Naive thymus-derived CD4-positive, alpha-beta T cell (primary cell): ENCODE measurements at regions of chr2 and their contacts with region 1.

Region 1: DNA sequence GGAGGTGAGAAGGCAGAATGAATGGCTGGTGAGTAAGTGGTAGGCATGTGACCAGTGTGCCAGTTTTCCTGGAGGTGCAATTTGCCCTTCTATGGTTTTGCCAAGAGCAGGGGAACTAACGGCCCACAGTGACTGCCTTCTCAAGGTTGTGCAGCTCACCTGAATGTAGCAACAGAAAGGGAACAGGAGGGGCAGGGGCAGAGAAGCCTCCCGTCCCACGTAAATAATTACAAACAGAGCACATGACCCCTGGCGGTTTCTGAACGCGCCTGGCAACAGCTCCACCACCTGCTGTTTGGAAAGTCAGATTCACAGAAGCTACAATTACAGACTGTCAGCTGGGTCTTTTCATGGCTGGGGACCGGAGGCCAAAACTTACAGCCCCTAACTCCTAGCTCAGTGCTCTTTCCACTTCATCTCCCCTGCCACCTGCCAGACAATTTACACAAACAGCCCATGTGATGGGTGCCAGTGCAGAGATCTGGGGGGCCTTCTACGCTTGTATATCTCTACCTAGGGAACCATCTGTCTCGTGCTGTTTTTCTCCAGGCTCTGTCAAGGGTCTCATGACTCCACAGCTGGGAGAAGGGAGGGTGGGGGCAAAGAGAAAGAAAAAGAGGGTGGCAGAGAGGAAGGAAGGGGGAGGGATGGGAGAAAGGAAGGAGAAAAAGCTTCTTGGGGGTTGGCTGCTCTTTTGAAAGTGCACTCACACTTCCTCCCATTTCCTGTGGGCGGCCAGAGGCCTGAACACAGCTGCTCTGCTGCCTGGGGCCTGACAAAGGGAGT is 69.6 kb downstream of the POLR1A start:
- DNase-seq: peak in 8 of 9 donors; percentile 63 to 89 (median 84)
- ATAC-seq: peak; percentile 65
- H3K4me3 ChIP-seq: peak overlapping the region; percentile 48
- H3K4me3 Mint-ChIP-seq: peak overlapping the region; percentile 80 to 88 (median 86)
- H3K27ac ChIP-seq: peak overlapping the region; percentile 88
- H3K27ac Mint-ChIP-seq: peak overlapping the region; percentile 94 to 100 (median 100)
- H3K4me1 ChIP-seq: peaks cover 55 to 84% of the 10 kb centered on the region in 2 donors
- H3K4me1 Mint-ChIP-seq: peaks cover 57 to 92% (median 88%) of the 10 kb centered on the region in 7 donors
- H3K27me3 ChIP-seq: no peaks in the 10 kb centered on the region
- H3K27me3 Mint-ChIP-seq: peaks cover 0 to 5% (median 0%) of the 10 kb centered on the region in 5 donors

Region 2: GRCh38 chr2:85707304-85707703 is 328.8 kb before region 1 on chr2:
- CTCF ChIA-PET with region 1: no interaction called
- POLR2A ChIA-PET with region 1: no interaction called
- intact Hi-C with region 1: loop called in 1 of 2 experiments (anchors 5 kb)
- DNase-seq: peak in 8 of 9 donors; percentile 38 to 75 (median 66)
- ATAC-seq: peak; percentile 85
- H3K4me3 ChIP-seq: no peak overlapping the region
- H3K4me3 Mint-ChIP-seq: peak overlapping the region in 1 of 10 donors; percentile 6
- H3K27ac ChIP-seq: no peak overlapping the region
- H3K27ac Mint-ChIP-seq: peak overlapping the region in 1 of 9 donors; percentile 90
- H3K4me1 ChIP-seq: peaks cover 0 to 25% of the 10 kb centered on the region in 2 donors
- H3K4me1 Mint-ChIP-seq: peaks cover 0 to 74% (median 5%) of the 10 kb centered on the region in 7 donors
- H3K27me3 ChIP-seq: peaks cover 0 to 4% of the 10 kb centered on the region in 2 donors
- H3K27me3 Mint-ChIP-seq: peaks cover 0 to 7% (median 4%) of the 10 kb centered on the region in 5 donors

Region 3: DNA sequence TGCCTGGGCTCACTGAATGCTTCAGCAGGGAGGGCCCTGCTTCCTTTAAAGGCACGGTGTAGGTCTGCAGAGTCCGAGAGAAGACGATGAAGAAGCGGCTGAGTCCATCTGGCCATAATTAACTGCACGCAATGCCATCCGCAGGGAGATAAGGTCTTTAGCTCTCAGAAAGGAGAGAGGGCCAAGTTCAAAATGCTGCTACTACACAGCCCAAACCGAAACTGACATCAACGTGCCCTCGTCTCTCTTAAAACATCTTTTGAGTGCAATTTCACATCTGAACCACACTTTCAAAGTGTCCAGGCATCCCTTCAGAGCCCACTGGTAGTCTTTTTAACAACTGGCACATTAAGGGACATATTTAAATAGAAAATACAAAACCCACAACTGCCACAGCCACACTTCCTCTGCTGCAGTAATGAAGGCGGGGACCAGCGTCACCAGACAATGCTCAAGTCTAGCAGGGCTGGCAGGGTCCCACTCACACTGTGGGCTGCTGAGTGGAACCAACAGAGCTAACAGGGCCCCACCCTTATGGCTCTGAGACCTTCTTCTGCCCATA is 183.1 kb before region 1 on chr2:
- CTCF ChIA-PET with region 1: interaction called, 9 read pairs
- POLR2A ChIA-PET with region 1: interaction called, 18 read pairs
- intact Hi-C with region 1: loop called (anchors 1 kb)
- DNase-seq: peak; percentile 35 to 77 (median 63)
- ATAC-seq: peak; percentile 92
- H3K4me3 ChIP-seq: peak overlapping the region; percentile 36
- H3K4me3 Mint-ChIP-seq: peak overlapping the region; percentile 80 to 94 (median 86)
- H3K27ac ChIP-seq: peak overlapping the region; percentile 91
- H3K27ac Mint-ChIP-seq: peak overlapping the region; percentile 98 to 100 (median 100)
- H3K4me1 ChIP-seq: peaks cover 54% of the 10 kb centered on the region in 2 donors
- H3K4me1 Mint-ChIP-seq: peaks cover 48 to 84% (median 68%) of the 10 kb centered on the region in 7 donors
- H3K27me3 ChIP-seq: no peaks in the 10 kb centered on the region
- H3K27me3 Mint-ChIP-seq: no peaks in the 10 kb centered on the region

Region 4: DNA sequence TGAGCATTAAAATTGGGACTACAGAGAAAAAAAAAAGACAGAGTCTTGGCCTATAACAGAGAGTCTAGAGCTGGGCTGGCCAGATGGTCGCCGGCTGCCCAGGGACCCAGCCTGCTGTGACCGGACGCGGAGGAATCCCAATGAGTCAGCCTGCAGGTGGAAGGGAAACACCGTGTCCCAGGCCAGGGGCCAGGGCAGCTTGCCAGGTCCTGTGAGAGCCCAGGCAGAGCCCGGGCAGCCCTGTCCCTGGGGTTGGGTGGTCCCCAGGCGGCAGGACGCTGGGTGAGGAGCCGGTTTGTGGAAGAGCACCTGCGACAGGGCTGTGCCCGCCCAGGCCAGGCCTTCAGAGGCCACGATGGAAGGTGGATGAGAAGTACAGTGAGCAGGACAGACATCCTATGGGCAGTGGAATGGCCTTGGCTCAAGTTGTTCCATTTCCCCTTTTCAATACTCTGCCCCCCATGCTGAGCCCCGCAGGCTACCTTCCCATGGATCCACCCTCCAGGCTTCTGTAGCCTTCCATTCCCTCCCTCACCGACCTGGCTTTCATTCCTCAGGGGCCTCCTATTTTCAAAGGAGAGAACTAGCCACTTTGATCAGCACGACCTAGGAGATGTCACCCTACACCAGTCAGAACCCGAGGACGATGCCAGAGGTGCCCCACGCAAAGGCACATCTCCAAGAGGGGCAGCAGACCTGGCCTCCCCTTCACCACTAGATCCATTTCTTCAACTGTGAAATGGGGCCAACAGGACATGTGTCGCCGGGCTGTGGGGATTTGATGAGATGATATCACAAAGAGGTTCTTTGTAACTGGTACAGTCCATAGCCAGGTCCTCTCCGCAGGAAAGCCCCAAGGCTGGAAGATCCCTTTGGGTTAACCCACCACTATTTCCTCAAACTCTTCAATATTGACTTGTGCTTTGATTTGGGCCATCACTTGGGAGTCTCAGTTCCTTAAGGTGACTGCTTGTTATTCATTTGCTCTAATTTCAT is 17.9 kb before region 1 on chr2:
- CTCF ChIA-PET with region 1: no interaction called
- POLR2A ChIA-PET with region 1: interaction called, 3 read pairs
- intact Hi-C with region 1: loop called (anchors 1 kb)
- DNase-seq: no peak
- ATAC-seq: no peak
- H3K4me3 ChIP-seq: no peak overlapping the region
- H3K4me3 Mint-ChIP-seq: no peak overlapping the region
- H3K27ac ChIP-seq: no peak overlapping the region
- H3K27ac Mint-ChIP-seq: peak overlapping the region; percentile 9 to 80 (median 57)
- H3K4me1 ChIP-seq: peaks cover 5 to 9% of the 10 kb centered on the region in 2 donors
- H3K4me1 Mint-ChIP-seq: peaks cover 0 to 25% (median 13%) of the 10 kb centered on the region in 7 donors
- H3K27me3 ChIP-seq: no peaks in the 10 kb centered on the region
- H3K27me3 Mint-ChIP-seq: no peaks in the 10 kb centered on the region

Region 5: DNA sequence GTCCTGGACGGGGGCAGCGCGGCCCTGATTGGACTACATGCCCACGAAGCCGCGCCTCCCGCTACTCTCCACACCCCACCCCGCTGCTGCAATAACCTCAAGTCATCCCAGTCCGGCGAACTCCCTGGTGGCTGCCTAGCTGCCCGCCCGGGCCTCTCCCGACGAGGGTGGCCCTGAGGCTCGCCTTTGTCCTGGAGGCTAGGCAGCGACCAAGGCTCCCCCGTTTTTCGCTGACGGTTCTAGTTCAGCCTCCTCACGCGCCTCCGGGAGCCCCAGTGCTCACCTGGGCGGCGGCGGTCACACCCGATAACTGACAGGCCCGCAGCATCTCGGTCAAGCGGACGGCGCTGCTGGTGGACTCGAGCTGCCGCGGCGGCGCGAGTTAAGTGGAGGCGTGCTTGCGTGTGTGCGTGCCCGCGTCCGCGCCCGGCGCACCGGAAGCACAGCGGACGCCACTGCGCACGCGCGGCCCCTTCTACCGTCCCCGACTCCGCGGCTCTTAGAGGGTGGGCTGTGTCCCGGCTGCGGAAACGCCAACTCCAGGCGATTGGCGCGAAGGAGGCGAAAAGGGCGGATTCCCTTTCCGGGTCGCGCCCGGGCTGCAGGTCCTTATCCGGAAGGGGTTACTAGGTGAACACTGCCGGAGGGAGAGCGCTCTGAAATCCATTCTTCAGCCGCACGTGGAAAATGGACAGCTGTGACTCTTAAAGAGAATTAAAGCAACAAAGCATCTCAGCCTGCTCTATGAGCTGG is 159.2 kb after region 1 on chr2 and contains the start of gene IMMT:
- CTCF ChIA-PET with region 1: no interaction called
- POLR2A ChIA-PET with region 1: no interaction called
- intact Hi-C with region 1: loop called (anchors 1 to 2 kb)
- DNase-seq: peak; percentile 86 to 96 (median 94)
- ATAC-seq: peak; percentile 94
- H3K4me3 ChIP-seq: peak within 1 kb of the TSS; percentile 74
- H3K4me3 Mint-ChIP-seq: peak within 1 kb of the TSS; percentile 86 to 99 (median 95)
- H3K27ac ChIP-seq: peak within 1 kb of the TSS; percentile 97
- H3K27ac Mint-ChIP-seq: peak within 1 kb of the TSS; percentile 82 to 97 (median 90)
- H3K4me1 ChIP-seq: peaks cover 15 to 23% of the 10 kb centered on the region in 2 donors
- H3K4me1 Mint-ChIP-seq: peaks cover 35 to 74% (median 60%) of the 10 kb centered on the region in 7 donors
- H3K27me3 ChIP-seq: no peaks in the 10 kb centered on the region
- H3K27me3 Mint-ChIP-seq: no peaks in the 10 kb centered on the region
- total RNA-seq, gene IMMT: 59.2 to 164 (median 77.0) TPM